Activated naive CD8-positive, alpha-beta T cell treated with anti-CD3 and anti-CD28 coated beads, Interleukin-2, amount 10 ng/mL, durations not matched to agents 7 days and 5 days (primary cell): ENCODE measurements at regions of chr20 and their contacts with region 1.

Region 1: GRCh38 chr20:45934586-45935415 is at the start of gene PCIF1:
- DNase-seq: peak; percentile 98
- ATAC-seq: peak; percentile 80
- H3K4me3 Mint-ChIP-seq: peak within 1 kb of the TSS; percentile 98
- H3K27ac Mint-ChIP-seq: peak within 1 kb of the TSS; percentile 98
- H3K4me1 Mint-ChIP-seq: peaks cover 18% of the 10 kb centered on the region
- H3K27me3 Mint-ChIP-seq: no peaks in the 10 kb centered on the region
- total RNA-seq, gene PCIF1: 54.5 to 58.3 TPM

Region 2: GRCh38 chr20:45552456-45552855 is 382.3 kb before region 1 on chr20:
- POLR2A ChIA-PET with region 1: no interaction called
- DNase-seq: no peak
- ATAC-seq: no peak
- H3K4me3 Mint-ChIP-seq: no peak overlapping the region
- H3K27ac Mint-ChIP-seq: no peak overlapping the region
- H3K4me1 Mint-ChIP-seq: no peaks in the 10 kb centered on the region
- H3K27me3 Mint-ChIP-seq: peaks cover 17% of the 10 kb centered on the region

Region 3: DNA sequence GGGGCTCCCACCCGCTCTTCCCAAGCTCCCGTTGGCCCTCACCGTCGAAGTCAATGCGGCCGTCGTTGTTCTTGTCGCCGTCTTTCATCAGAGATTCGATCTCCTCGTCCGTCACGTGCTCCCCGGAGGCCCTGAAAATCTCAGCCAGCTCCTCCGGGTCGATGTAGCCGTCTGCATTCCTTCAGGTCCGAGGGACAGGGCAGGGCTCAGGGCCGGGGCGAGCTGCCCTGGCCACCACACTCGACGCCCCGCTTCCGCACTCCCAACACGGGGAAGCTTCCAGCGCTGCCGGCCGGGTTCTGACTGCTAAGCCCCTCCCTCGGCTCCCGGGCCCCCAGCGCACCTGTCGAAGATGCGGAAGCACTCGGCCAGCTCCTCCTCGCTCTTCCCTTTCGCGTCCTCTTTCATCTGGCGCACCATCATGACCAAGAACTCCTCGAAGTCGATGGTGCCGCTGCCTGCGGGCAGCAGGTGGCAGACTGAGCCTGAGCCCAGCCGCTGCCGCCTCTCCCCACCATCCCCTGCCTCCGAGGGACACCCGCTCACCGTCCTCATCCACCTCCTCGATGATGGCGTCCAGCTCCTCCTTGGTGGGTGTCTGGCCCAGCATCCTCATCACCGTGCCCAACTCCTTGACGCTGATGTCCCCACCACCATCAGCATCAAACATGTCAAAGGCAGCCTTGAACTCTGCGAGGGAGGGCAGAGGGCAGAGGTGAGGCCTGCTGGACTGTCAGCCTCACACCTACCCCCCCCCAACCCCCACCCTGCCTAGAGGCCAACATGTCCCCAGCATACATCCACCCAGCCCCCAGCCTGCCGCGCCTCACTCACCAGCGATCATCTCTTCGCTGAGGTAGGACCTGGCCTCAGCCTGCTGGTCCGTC is 110.6 kb before region 1 on chr20:
- POLR2A ChIA-PET with region 1: interaction called, 15 read pairs
- DNase-seq: peak; percentile 60
- ATAC-seq: peak; percentile 78
- H3K4me3 Mint-ChIP-seq: peak overlapping the region; percentile 80
- H3K27ac Mint-ChIP-seq: peak overlapping the region; percentile 64
- H3K4me1 Mint-ChIP-seq: peaks cover 21% of the 10 kb centered on the region
- H3K27me3 Mint-ChIP-seq: peaks cover 36% of the 10 kb centered on the region

Region 4: GRCh38 chr20:45880988-45881788 is 53.6 kb before region 1 on chr20 and contains the start of gene ZSWIM1:
- POLR2A ChIA-PET with region 1: interaction called, 30 read pairs
- DNase-seq: peak; percentile 97
- ATAC-seq: peak; percentile 99
- H3K4me3 Mint-ChIP-seq: peak within 1 kb of the TSS; percentile 87
- H3K27ac Mint-ChIP-seq: peak within 1 kb of the TSS; percentile 85
- H3K4me1 Mint-ChIP-seq: peaks cover 40% of the 10 kb centered on the region
- H3K27me3 Mint-ChIP-seq: no peaks in the 10 kb centered on the region
- total RNA-seq, gene ZSWIM1: 12.2 to 13.0 TPM

Region 5: GRCh38 chr20:45910670-45911485 is 23.9 kb before region 1 on chr20:
- POLR2A ChIA-PET with region 1: interaction called, 18 read pairs
- DNase-seq: peak; percentile 97
- ATAC-seq: peak; percentile 93
- H3K4me3 Mint-ChIP-seq: peak overlapping the region; percentile 72
- H3K27ac Mint-ChIP-seq: peak overlapping the region; percentile 82
- H3K4me1 Mint-ChIP-seq: peaks cover 14% of the 10 kb centered on the region
- H3K27me3 Mint-ChIP-seq: peaks cover 9% of the 10 kb centered on the region

Region 6: GRCh38 chr20:45946149-45946970 is 11.6 kb after region 1 on chr20:
- POLR2A ChIA-PET with region 1: interaction called, 22 read pairs
- DNase-seq: no peak
- ATAC-seq: peak; percentile 20
- H3K4me3 Mint-ChIP-seq: no peak overlapping the region
- H3K27ac Mint-ChIP-seq: peak overlapping the region; percentile 59
- H3K4me1 Mint-ChIP-seq: peaks cover 1% of the 10 kb centered on the region
- H3K27me3 Mint-ChIP-seq: no peaks in the 10 kb centered on the region

Region 7: GRCh38 chr20:45971675-45972499 is 37.1 kb after region 1 on chr20 and contains the start of gene ZNF335:
- POLR2A ChIA-PET with region 1: interaction called, 93 read pairs
- DNase-seq: peak; percentile 99
- ATAC-seq: peak; percentile 77
- H3K4me3 Mint-ChIP-seq: peak within 1 kb of the TSS; percentile 84
- H3K27ac Mint-ChIP-seq: peak within 1 kb of the TSS; percentile 91
- H3K4me1 Mint-ChIP-seq: peaks cover 12% of the 10 kb centered on the region
- H3K27me3 Mint-ChIP-seq: peaks cover 2% of the 10 kb centered on the region
- total RNA-seq, gene ZNF335: 43.3 to 43.7 TPM

Region 8: GRCh38 chr20:46111028-46111835 is 176.4 kb after region 1 on chr20:
- POLR2A ChIA-PET with region 1: no interaction called
- DNase-seq: no peak
- ATAC-seq: peak; percentile 47
- H3K4me3 Mint-ChIP-seq: no peak overlapping the region
- H3K27ac Mint-ChIP-seq: no peak overlapping the region
- H3K4me1 Mint-ChIP-seq: peaks cover 6% of the 10 kb centered on the region
- H3K27me3 Mint-ChIP-seq: peaks cover 35% of the 10 kb centered on the region